ENCODE measurements at regions of chr1 and their contacts with region 1.

Region 1: GRCh38 chr1:73800376-73800775 is 397.6 kb downstream of the LRRIQ3 start:
- DNase-seq: no peak
- H3K4me3 ChIP-seq: no peak overlapping the region
- H3K27ac ChIP-seq: no peak overlapping the region
- H3K4me1 ChIP-seq: peaks cover 0 to 8% (median 0%) of the 10 kb centered on the region in 4 donors
- H3K27me3 ChIP-seq: no peaks in the 10 kb centered on the region
- CTCF ChIP-seq: no peak

Region 2: GRCh38 chr1:73839922-73840321 is 39.5 kb after region 1 on chr1:
- intact Hi-C with region 1: no loop called
- DNase-seq: no peak
- H3K4me3 ChIP-seq: no peak overlapping the region
- H3K27ac ChIP-seq: no peak overlapping the region
- H3K4me1 ChIP-seq: no peaks in the 10 kb centered on the region
- H3K27me3 ChIP-seq: no peaks in the 10 kb centered on the region
- CTCF ChIP-seq: no peak

Region 3: GRCh38 chr1:74652597-74653139 is 852.3 kb after region 1 on chr1:
- intact Hi-C with region 1: loop called (anchors 5 kb)
- DNase-seq: no peak
- H3K4me3 ChIP-seq: no peak overlapping the region
- H3K27ac ChIP-seq: no peak overlapping the region
- H3K4me1 ChIP-seq: no peaks in the 10 kb centered on the region
- H3K27me3 ChIP-seq: no peaks in the 10 kb centered on the region
- CTCF ChIP-seq: no peak